Psoas muscle (tissue), 8 donors: ENCODE measurements at regions of chr3 and their contacts with region 1.

Region 1: GRCh38 chr3:138686771-138687221 is 78.2 kb downstream of the FAIM start:
- DNase-seq: no peak
- ATAC-seq: no peak
- H3K4me3 ChIP-seq: no peak overlapping the region
- H3K27ac ChIP-seq: no peak overlapping the region
- H3K4me1 ChIP-seq: no peaks in the 10 kb centered on the region
- H3K27me3 ChIP-seq: no peaks in the 10 kb centered on the region
- CTCF ChIP-seq: no peak

Region 2: GRCh38 chr3:138726946-138727730 is 40.3 kb after region 1 on chr3:
- intact Hi-C with region 1: no loop called
- DNase-seq: no peak
- ATAC-seq: no peak
- H3K4me3 ChIP-seq: no peak overlapping the region
- H3K27ac ChIP-seq: no peak overlapping the region
- H3K4me1 ChIP-seq: no peaks in the 10 kb centered on the region
- H3K27me3 ChIP-seq: no peaks in the 10 kb centered on the region
- CTCF ChIP-seq: no peak

Region 3: DNA sequence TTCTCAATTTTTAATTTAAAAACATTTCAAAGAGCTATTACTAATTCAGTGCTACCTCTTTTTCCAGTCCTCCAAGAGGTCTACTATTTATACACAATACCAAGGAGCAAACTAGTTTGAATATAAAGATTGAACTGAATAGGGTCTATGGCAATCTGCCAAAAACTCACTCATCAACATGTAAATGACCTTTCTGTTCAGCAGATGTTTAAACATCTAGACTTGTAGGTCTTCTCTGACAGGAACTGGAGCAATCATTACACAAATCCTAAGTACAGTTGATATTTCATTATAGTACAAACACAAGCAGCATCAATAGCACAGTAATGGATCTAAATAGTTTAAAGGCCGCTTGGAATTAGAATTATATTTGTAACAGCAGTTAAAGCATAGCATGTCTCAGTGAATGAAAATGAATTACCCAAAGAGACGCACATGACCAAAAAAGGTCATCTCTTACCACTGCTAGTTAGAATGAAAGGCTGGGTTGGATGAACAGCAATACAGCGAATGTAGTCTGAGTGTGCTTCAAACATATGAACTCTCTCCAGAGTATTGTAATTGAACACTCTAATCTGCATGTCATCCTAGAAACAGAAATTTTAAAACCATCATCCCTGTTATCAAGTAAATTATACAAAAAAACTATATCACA is 691.9 kb after region 1 on chr3:
- intact Hi-C with region 1: loop called in 1 of 2 experiments (anchors 10 kb)
- DNase-seq: no peak
- ATAC-seq: no peak
- H3K4me3 ChIP-seq: no peak overlapping the region
- H3K27ac ChIP-seq: no peak overlapping the region
- H3K4me1 ChIP-seq: no peaks in the 10 kb centered on the region
- H3K27me3 ChIP-seq: no peaks in the 10 kb centered on the region
- CTCF ChIP-seq: no peak